Caco-2 (cell line): ENCODE measurements at regions of chr14 and their contacts with region 1.

Region 1: GRCh38 chr14:92106143-92106926 is at the start of gene ATXN3:
- DNase-seq: peak; percentile 95 to 98
- H3K4me3 ChIP-seq: peak within 1 kb of the TSS; percentile 59
- H3K4me3 Mint-ChIP-seq: peak within 1 kb of the TSS; percentile 87
- H3K27ac Mint-ChIP-seq: peak within 1 kb of the TSS; percentile 66
- H3K4me1 ChIP-seq: peaks cover 9% of the 10 kb centered on the region
- H3K4me1 Mint-ChIP-seq: peaks cover 7% of the 10 kb centered on the region
- H3K27me3 ChIP-seq: no peaks in the 10 kb centered on the region
- H3K27me3 Mint-ChIP-seq: no peaks in the 10 kb centered on the region
- CTCF ChIP-seq: peak in 1 of 2 experiments; percentile 87
- total RNA-seq, gene ATXN3: 18.8 and 29.3 TPM in 2 replicates

Region 2: DNA sequence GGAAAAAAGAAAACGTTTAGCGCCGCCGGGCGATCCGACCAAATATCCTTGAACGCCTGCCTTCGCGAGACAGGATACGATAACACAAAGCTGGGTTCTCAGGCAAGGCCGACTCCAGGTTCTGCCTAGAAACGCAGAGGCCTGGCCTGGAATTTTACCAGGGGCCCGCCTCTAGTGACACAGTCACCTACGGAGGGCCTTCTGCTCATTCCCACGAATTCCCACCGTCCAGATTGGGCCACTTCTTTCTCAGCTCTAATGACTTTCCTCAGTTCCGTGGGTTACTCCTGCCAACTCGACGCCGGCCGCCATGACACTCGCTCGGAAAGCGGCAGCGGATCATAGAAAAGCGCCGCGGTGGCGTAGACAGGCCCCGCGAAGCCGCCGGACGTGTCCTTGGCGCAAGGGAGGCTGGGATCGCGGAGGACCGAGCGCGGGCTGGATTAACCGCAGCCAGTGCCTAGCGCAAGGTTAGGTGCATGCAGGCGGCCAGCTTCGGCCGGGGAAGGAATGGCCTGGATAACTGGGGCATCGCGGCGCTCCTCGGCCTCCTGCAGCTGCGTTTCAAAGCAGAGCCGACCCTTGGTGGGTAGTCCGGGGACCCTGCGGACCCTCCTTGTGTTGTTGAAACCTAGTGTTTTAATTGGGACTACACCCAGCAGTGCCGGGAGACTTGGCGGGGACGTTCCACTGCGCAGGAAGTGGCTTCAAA is 66.5 kb before region 1 on chr14 and contains the start of gene TRIP11:
- CTCF ChIA-PET with region 1: interaction called, 10 read pairs
- POLR2A ChIA-PET with region 1: interaction called, 7 read pairs
- intact Hi-C with region 1: loop called (anchors 1 kb)
- DNase-seq: peak; percentile 92 to 93
- H3K4me3 ChIP-seq: peak within 1 kb of the TSS; percentile 86
- H3K4me3 Mint-ChIP-seq: peak within 1 kb of the TSS; percentile 95
- H3K27ac Mint-ChIP-seq: peak within 1 kb of the TSS; percentile 99
- H3K4me1 ChIP-seq: peaks cover 9% of the 10 kb centered on the region
- H3K4me1 Mint-ChIP-seq: peaks cover 13% of the 10 kb centered on the region
- H3K27me3 ChIP-seq: no peaks in the 10 kb centered on the region
- H3K27me3 Mint-ChIP-seq: no peaks in the 10 kb centered on the region
- CTCF ChIP-seq: no peak
- total RNA-seq, gene TRIP11: 42.9 and 43.4 TPM in 2 replicates

Region 3: GRCh38 chr14:92121670-92122350 is 15.5 kb after region 1 on chr14 and contains the starts of genes CPSF2 and NDUFB1:
- CTCF ChIA-PET with region 1: interaction called, 35 read pairs
- POLR2A ChIA-PET with region 1: interaction called, 25 read pairs
- intact Hi-C with region 1: no loop called
- DNase-seq: peak; percentile 82 to 90
- H3K4me3 ChIP-seq: peak within 1 kb of the TSS; percentile 98
- H3K4me3 Mint-ChIP-seq: peak within 1 kb of the TSS; percentile 91
- H3K27ac Mint-ChIP-seq: peak within 1 kb of the TSS; percentile 99
- H3K4me1 ChIP-seq: peaks cover 3% of the 10 kb centered on the region; the same call in 1 of the 2 replicates
- H3K4me1 Mint-ChIP-seq: peaks cover 9% of the 10 kb centered on the region
- H3K27me3 ChIP-seq: no peaks in the 10 kb centered on the region
- H3K27me3 Mint-ChIP-seq: no peaks in the 10 kb centered on the region
- CTCF ChIP-seq: no peak
- total RNA-seq, gene CPSF2: 76.9 and 80.3 TPM in 2 replicates
- total RNA-seq, gene NDUFB1: 105 and 115 TPM in 2 replicates

Region 4: GRCh38 chr14:92199763-92200162 is 93.4 kb after region 1 on chr14:
- CTCF ChIA-PET with region 1: no interaction called
- POLR2A ChIA-PET with region 1: no interaction called
- intact Hi-C with region 1: no loop called
- DNase-seq: no peak
- H3K4me3 ChIP-seq: no peak overlapping the region
- H3K4me3 Mint-ChIP-seq: no peak overlapping the region
- H3K27ac Mint-ChIP-seq: no peak overlapping the region
- H3K4me1 ChIP-seq: no peaks in the 10 kb centered on the region
- H3K4me1 Mint-ChIP-seq: no peaks in the 10 kb centered on the region
- H3K27me3 ChIP-seq: no peaks in the 10 kb centered on the region; the same call in 1 of the 2 replicates
- H3K27me3 Mint-ChIP-seq: peaks cover 3% of the 10 kb centered on the region
- CTCF ChIP-seq: no peak